Prostate gland (tissue), 2 donors: ENCODE measurements at regions of chr1 and their contacts with region 1.

Region 1: DNA sequence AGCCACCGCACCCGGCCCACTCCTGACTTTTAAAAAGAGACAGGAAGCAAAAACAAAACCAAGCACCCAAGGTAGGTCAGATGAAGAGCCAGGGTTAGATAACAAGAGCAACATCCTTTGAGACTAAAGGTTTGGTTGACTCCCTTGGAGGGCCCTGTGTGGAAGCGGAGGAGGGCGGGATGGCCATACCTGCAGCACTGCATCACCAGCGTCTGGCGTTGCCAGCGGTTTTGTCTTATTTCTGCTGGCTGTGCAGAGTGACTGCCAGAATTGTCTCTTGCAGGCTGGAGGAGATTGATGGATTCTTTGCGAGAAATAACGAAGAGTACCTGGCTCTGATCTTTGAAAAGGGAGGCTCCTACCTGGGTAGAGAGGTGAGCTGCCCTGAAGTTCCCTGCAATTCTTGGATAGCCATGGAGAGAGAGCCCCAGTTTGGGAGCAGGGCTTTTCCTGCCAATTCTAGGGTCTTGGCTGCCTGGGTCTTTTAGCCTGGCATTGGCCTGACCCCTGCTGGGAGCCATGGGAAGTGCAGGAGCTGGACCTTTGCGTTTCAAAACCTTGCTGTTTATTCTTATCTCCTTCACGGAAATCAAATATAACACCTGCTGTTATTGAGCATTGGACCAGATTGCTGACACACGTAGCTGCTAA is 24.0 kb downstream of the QSOX1 start:
- DNase-seq: peak; percentile 34
- H3K4me3 ChIP-seq: no peak overlapping the region
- H3K27ac ChIP-seq: no peak overlapping the region
- H3K4me1 ChIP-seq: no peaks in the 10 kb centered on the region
- H3K27me3 ChIP-seq: no peaks in the 10 kb centered on the region
- CTCF ChIP-seq: peak; percentile 85 to 86 (median 85)
- POLR2A ChIP-seq: no peak

Region 2: DNA sequence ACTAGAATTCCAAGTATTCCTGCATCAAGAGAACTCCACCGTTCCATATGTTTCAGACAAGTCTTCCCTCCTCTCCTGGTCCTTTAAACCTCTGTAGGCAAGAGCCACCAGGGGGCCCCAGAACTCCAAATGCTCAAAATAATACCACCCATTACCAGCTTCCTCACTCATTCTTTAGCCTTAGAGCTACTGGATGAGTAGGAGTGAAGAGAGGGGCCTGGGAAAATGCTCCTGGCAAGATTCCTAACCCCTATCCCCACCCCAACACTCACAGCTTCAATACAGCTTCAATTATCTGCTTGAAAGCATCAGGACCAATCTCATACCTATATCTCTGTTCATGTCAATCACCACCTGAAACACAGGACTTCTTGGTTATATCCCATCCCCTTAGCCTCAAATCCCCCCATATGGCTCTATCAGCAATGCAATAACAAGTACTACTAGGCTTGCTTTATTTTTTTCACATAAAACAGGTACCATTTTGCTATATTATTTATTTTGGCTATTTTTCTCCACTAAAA is 310.8 kb before region 1 on chr1:
- intact Hi-C with region 1: loop called (anchors 5 kb)
- DNase-seq: peak; percentile 25
- H3K4me3 ChIP-seq: no peak overlapping the region
- H3K27ac ChIP-seq: no peak overlapping the region
- H3K4me1 ChIP-seq: peaks cover 2% of the 10 kb centered on the region
- H3K27me3 ChIP-seq: no peaks in the 10 kb centered on the region
- CTCF ChIP-seq: peak; percentile 12 to 60 (median 54)
- POLR2A ChIP-seq: no peak

Region 3: DNA sequence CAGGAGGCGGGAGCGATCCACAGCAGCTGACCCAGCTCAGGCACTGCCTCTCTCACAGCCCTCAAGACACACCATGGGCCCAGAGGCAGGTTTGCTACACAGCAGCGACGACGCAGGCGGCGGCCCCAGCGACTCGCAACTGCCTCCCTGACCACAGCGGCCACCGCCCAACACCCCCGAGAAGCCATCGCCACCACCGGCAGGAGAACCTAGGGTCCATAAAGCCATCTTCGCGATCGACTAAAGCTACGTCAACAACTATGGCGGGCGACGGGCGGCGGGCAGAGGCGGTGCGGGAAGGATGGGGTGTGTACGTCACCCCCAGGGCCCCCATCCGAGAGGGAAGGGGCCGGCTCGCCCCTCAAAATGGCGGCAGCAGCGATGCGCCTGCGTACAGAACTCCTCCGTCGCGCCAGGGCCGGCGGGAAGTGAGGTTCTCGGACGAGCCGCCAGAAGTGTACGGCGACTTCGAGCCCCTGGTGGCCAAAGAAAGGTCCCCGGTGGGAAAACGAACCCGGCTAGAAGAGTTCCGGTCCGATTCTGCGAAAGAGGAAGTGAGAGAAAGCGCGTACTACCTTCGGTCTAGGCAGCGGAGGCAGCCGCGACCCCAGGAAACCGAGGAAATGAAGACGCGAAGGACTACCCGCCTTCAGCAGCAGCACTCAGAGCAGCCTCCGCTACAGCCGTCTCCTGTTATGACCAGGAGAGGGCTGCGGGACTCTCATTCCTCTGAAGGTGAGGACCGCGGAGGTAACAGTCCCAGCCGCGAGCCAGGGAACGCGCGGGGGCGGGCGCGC is 296.2 kb before region 1 on chr1 and contains the start of gene TOR1AIP1:
- intact Hi-C with region 1: loop called (anchors 5 kb)
- DNase-seq: peak; percentile 97
- H3K4me3 ChIP-seq: peak within 1 kb of the TSS; percentile 72 to 79
- H3K27ac ChIP-seq: peak within 1 kb of the TSS; percentile 99 to 100
- H3K4me1 ChIP-seq: no peaks in the 10 kb centered on the region
- H3K27me3 ChIP-seq: no peaks in the 10 kb centered on the region
- CTCF ChIP-seq: peak; percentile 29 to 87 (median 58)
- POLR2A ChIP-seq: peak; percentile 77
- total RNA-seq, gene TOR1AIP1: 81.7 to 86.4 TPM

Region 4: GRCh38 chr1:180040034-180040433 is 138.6 kb before region 1 on chr1:
- intact Hi-C with region 1: no loop called
- DNase-seq: no peak
- H3K4me3 ChIP-seq: no peak overlapping the region
- H3K27ac ChIP-seq: no peak overlapping the region
- H3K4me1 ChIP-seq: no peaks in the 10 kb centered on the region
- H3K27me3 ChIP-seq: no peaks in the 10 kb centered on the region
- CTCF ChIP-seq: no peak
- POLR2A ChIP-seq: no peak

Region 5: GRCh38 chr1:180094705-180095295 is 83.8 kb before region 1 on chr1:
- intact Hi-C with region 1: loop called (anchors 5 kb)
- DNase-seq: no peak
- H3K4me3 ChIP-seq: no peak overlapping the region
- H3K27ac ChIP-seq: no peak overlapping the region
- H3K4me1 ChIP-seq: no peaks in the 10 kb centered on the region
- H3K27me3 ChIP-seq: no peaks in the 10 kb centered on the region
- CTCF ChIP-seq: no peak
- POLR2A ChIP-seq: no peak

Region 6: GRCh38 chr1:180198196-180198595 is 19.6 kb after region 1 on chr1:
- intact Hi-C with region 1: no loop called
- DNase-seq: no peak
- H3K4me3 ChIP-seq: no peak overlapping the region
- H3K27ac ChIP-seq: no peak overlapping the region
- H3K4me1 ChIP-seq: no peaks in the 10 kb centered on the region
- H3K27me3 ChIP-seq: no peaks in the 10 kb centered on the region
- CTCF ChIP-seq: no peak
- POLR2A ChIP-seq: no peak

Region 7: DNA sequence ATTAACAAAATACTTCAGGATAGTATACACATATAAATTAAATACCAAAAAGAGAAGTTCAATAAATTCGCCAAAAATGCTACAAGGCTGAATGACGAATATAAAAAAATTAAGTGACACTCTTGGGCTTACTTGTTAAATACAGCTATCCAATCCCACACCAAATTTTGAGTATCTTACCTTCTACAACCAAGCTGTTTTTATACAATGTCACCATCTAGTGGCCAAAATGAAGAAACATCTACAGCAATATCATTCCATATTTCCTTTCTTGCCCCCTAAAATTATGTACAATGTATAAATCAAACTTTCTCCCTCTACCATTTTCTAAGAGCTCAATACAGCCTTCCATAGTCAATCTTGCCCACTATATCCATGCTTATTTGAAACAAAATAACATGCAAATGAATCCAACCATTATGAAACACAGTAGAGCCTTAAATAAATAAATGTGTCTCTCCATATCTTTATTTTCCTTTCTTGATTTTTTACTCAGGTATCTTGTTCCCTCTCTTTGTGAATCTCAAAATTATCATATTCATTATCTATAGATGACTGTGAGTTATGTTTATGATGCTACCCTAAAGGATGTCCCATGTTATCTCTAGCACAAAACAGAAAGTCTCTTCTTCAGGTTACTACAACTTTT is 237.5 kb after region 1 on chr1:
- intact Hi-C with region 1: no loop called
- DNase-seq: no peak
- H3K4me3 ChIP-seq: no peak overlapping the region
- H3K27ac ChIP-seq: no peak overlapping the region
- H3K4me1 ChIP-seq: no peaks in the 10 kb centered on the region
- H3K27me3 ChIP-seq: no peaks in the 10 kb centered on the region
- CTCF ChIP-seq: peak in 3 of 4 experiments; percentile 45 to 53 (median 51)
- POLR2A ChIP-seq: no peak